Endothelial cell of umbilical vein (primary cell): ENCODE measurements at regions of chr15 and their contacts with region 1.

Region 1: DNA sequence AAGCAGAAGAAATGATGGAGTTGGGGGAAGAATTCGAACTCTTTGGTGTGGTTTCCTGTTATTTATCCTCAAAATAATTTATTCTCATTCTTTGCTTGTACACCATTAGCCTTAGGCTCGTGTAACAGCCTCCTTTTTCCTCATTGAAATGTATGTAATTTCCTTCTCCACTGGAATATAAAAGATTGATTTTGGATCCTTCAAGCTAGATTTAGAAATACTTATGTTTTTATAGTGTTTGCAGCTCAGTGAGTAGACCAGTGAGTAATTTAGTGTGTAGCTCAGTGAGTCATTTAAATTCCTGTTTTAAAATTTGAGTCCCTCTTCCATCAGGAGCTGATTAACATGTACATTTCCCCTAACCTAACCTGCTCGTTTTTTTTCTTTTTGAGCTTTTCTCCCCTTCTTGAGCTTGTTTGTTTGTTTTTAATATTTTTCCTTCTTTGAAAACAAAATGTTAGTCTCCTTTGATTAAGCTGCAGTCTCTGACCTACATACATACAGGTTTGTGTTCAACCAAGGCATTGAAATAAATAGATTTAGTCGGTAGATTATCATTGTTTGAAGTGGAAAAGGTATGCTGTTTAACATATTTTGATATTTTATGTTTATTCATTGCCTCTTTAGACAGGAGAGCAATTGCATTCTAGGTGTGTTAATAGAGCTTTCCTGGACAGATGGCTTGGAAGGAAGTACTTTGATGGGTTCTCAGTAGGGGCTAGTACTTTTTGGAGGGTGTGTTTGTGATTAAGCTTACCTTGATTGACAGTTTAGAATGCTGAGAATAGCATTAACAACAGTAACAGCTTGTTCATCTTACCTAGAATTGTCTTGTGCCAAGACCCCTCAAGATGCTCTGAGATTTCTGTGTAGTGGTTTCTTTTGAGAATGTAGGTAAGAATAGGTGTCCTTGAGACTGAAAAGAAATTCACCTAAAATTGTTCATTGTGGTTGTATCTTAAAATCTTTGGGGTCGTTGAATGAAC is 5.9 kb downstream of the USP3 start:
- DNase-seq: peak; percentile 69
- H3K4me3 ChIP-seq: peak overlapping the region in 1 of 3 experiments; percentile 37
- H3K27ac ChIP-seq: peak overlapping the region; percentile 35
- H3K4me1 ChIP-seq: peaks cover 50% of the 10 kb centered on the region
- H3K27me3 ChIP-seq: no peaks in the 10 kb centered on the region
- CTCF ChIP-seq: no peak
- POLR2A ChIP-seq: no peak

Region 2: GRCh38 chr15:63461230-63461985 is 48.8 kb before region 1 on chr15:
- CTCF ChIA-PET with region 1: interaction called, 71 read pairs
- POLR2A ChIA-PET with region 1: interaction called, 11 read pairs
- dilution Hi-C with region 1: no loop called
- intact Hi-C with region 1: no loop called
- DNase-seq: no peak
- H3K4me3 ChIP-seq: no peak overlapping the region
- H3K27ac ChIP-seq: no peak overlapping the region
- H3K4me1 ChIP-seq: peaks cover 10% of the 10 kb centered on the region
- H3K27me3 ChIP-seq: no peaks in the 10 kb centered on the region
- CTCF ChIP-seq: no peak
- POLR2A ChIP-seq: no peak

Region 3: GRCh38 chr15:63522225-63522578 is 12.0 kb after region 1 on chr15:
- CTCF ChIA-PET with region 1: interaction called, 17 read pairs
- POLR2A ChIA-PET with region 1: interaction called, 3 read pairs
- dilution Hi-C with region 1: no loop called
- intact Hi-C with region 1: no loop called
- DNase-seq: no peak
- H3K4me3 ChIP-seq: no peak overlapping the region
- H3K27ac ChIP-seq: no peak overlapping the region
- H3K4me1 ChIP-seq: peaks cover 18% of the 10 kb centered on the region
- H3K27me3 ChIP-seq: no peaks in the 10 kb centered on the region
- CTCF ChIP-seq: no peak
- POLR2A ChIP-seq: no peak

Region 4: GRCh38 chr15:63600616-63601025 is 90.4 kb after region 1 on chr15:
- CTCF ChIA-PET with region 1: interaction called, 36 read pairs
- POLR2A ChIA-PET with region 1: no interaction called
- dilution Hi-C with region 1: no loop called
- intact Hi-C with region 1: loop called (anchors 1 kb)
- DNase-seq: peak; percentile 94
- H3K4me3 ChIP-seq: peak overlapping the region; percentile 56 to 82 (median 71)
- H3K27ac ChIP-seq: no peak overlapping the region
- H3K4me1 ChIP-seq: peaks cover 11% of the 10 kb centered on the region
- H3K27me3 ChIP-seq: no peaks in the 10 kb centered on the region
- CTCF ChIP-seq: peak in 1 of 2 donors; percentile 20
- POLR2A ChIP-seq: peak; percentile 95